Left ventricle myocardium superior (tissue), 1 donor: ENCODE measurements at regions of chr1 and their contacts with region 1.

Region 1: GRCh38 chr1:167219646-167220536 is 795 bp upstream of the POU2F1 start:
- DNase-seq: peak; percentile 87
- ATAC-seq: peak; percentile 54

Region 2: DNA sequence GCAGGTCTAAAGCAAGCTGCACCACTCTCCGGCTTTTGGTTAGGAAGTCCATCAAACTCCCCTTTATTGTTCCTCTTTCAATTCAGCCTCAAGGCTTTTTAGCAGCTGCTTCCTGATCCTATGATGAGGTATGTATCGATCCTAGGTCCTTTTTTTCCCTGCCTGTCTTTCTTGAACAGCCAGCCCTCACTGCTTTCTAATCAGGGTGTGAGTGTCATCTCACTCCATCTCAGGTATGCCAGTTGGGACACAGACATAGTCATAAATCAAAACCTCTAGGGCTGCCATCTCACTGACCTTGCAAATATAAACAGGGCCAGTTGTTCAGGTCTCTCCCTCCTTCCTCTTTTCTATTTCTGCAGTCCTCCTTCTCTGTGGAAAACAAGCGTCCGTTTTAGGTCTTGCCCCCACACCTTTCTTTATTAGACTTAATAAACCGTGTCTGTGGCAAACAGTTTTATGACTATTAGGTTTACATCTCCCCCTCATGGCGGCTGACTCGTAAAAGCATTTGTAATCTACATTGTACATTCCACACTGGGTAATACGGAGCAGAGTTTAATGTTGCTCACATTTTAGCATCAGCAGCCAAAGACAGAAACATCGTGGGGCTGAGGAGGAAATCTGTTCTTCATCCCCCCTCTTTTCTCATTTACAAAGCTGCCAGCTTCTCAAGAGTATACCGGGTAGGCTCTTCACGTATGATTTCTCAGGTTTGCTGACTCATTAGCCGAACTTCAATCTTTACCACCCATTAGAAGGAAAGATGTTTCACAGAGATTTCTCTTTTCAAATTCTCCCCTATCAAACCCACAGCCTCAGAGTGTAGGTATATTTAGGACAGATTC is 114.4 kb before region 1 on chr1:
- intact Hi-C with region 1: loop called (anchors 10 kb)
- DNase-seq: no peak
- ATAC-seq: peak; percentile 9